GM12878 (cell line): ENCODE measurements at regions of chr6 and their contacts with region 1.

Region 1: GRCh38 chr6:37141281-37142049 is 28.5 kb upstream of the PIM1 start:
- DNase-seq: no peak
- ATAC-seq: peak; percentile 44
- H3K4me3 ChIP-seq: no peak overlapping the region
- H3K27ac ChIP-seq: no peak overlapping the region
- H3K4me1 ChIP-seq: peaks cover 47% of the 10 kb centered on the region
- H3K27me3 ChIP-seq: no peaks in the 10 kb centered on the region
- CTCF ChIP-seq: no peak
- EP300 ChIP-seq: no peak
- POLR2A ChIP-seq: no peak
- RAD21 ChIP-seq: no peak

Region 2: GRCh38 chr6:37155394-37156312 is 14.2 kb after region 1 on chr6:
- CTCF ChIA-PET with region 1: interaction called, 6 read pairs
- POLR2A ChIA-PET with region 1: interaction called, 5 read pairs
- RAD21 ChIA-PET with region 1: interaction called, 20 read pairs
- SMC1A ChIA-PET with region 1: interaction called, 21 read pairs
- in situ Hi-C with region 1: no loop called
- intact Hi-C with region 1: no loop called
- DNase-seq: peak; percentile 97
- ATAC-seq: peak; percentile 91
- H3K4me3 ChIP-seq: no peak overlapping the region; the same call in 1 of the 2 replicates
- H3K27ac ChIP-seq: peak overlapping the region; percentile 83
- H3K4me1 ChIP-seq: peaks cover 55% of the 10 kb centered on the region
- H3K27me3 ChIP-seq: no peaks in the 10 kb centered on the region
- CTCF ChIP-seq: no peak
- EP300 ChIP-seq: peak; percentile 89 to 92
- POLR2A ChIP-seq: peak; percentile 60
- RAD21 ChIP-seq: no peak

Region 3: GRCh38 chr6:37160922-37161778 is 19.7 kb after region 1 on chr6:
- CTCF ChIA-PET with region 1: interaction called, 6 read pairs
- POLR2A ChIA-PET with region 1: interaction called, 5 read pairs
- RAD21 ChIA-PET with region 1: interaction called, 20 read pairs
- SMC1A ChIA-PET with region 1: interaction called, 21 read pairs
- in situ Hi-C with region 1: no loop called
- intact Hi-C with region 1: no loop called
- DNase-seq: peak; percentile 66
- ATAC-seq: peak; percentile 92
- H3K4me3 ChIP-seq: no peak overlapping the region
- H3K27ac ChIP-seq: peak overlapping the region; percentile 67
- H3K4me1 ChIP-seq: peaks cover 26% of the 10 kb centered on the region
- H3K27me3 ChIP-seq: no peaks in the 10 kb centered on the region
- CTCF ChIP-seq: no peak
- EP300 ChIP-seq: peak in 1 of 2 experiments; percentile 65; a peak in 1 of 4 replicates
- POLR2A ChIP-seq: no peak
- RAD21 ChIP-seq: no peak